IMR-90 (cell line): ENCODE measurements at regions of chr2 and their contacts with region 1.

Region 1: GRCh38 chr2:141341444-141341843 is 789.4 kb downstream of the LRP1B start:
- DNase-seq: peak; percentile 99
- ATAC-seq: peak; percentile 97
- H3K4me3 ChIP-seq: no peak overlapping the region
- H3K27ac ChIP-seq: peak overlapping the region; percentile 74; the same call in 1 of the 2 replicates
- H3K4me1 ChIP-seq: peaks cover 2% of the 10 kb centered on the region; the same call in 1 of the 2 replicates
- H3K27me3 ChIP-seq: no peaks in the 10 kb centered on the region
- CTCF ChIP-seq: no peak
- POLR2A ChIP-seq: no peak
- RAD21 ChIP-seq: no peak

Region 2: GRCh38 chr2:141380008-141380979 is 38.9 kb after region 1 on chr2:
- CTCF ChIA-PET with region 1: no interaction called
- POLR2A ChIA-PET with region 1: no interaction called
- dilution Hi-C with region 1: no loop called
- in situ Hi-C with region 1: no loop called
- intact Hi-C with region 1: loop called (anchors 2 kb)
- DNase-seq: no peak
- ATAC-seq: no peak
- H3K4me3 ChIP-seq: no peak overlapping the region
- H3K27ac ChIP-seq: no peak overlapping the region
- H3K4me1 ChIP-seq: 0 out of 2 replicates have a peak, but pooled peaks cover 1% of the 10 kb centered on the region
- H3K27me3 ChIP-seq: no peaks in the 10 kb centered on the region
- CTCF ChIP-seq: no peak
- POLR2A ChIP-seq: no peak
- RAD21 ChIP-seq: no peak